ENCODE measurements at regions of chr4 and their contacts with region 1.

Region 1: DNA sequence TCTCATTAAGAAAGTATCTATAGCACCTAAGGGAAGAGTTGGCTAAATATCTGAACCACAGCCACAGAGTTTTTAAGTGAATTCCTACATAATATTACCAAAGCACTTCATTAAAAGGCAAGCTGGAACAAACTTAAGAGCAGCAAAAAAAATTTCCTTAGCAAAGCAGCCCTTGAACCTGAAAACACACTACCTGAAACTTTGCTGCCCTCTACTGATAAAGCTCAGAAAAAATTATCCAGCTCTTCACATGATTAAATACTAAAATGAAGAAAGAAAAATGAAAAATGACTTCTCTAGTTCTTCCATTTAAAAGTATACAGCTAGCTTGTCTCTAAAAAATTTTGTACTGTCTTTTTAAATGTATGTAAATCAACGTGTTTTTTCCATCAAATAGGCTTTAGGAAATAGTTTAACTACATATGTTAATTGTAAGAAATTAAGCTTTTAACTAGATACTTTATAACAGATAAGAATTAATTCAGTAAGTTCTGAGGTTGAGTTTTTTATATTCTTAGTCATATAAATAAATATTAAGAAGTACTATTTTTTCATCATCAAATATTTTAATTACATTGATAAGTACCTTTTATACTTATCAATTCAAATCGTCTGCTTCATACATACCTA is 156.1 kb downstream of the STPG2 start:
- DNase-seq: peak in 1 of 2 experiments; percentile 25
- H3K4me3 ChIP-seq: no peak overlapping the region
- H3K4me3 Mint-ChIP-seq: no peak overlapping the region
- H3K27ac Mint-ChIP-seq: no peak overlapping the region
- H3K4me1 ChIP-seq: no peaks in the 10 kb centered on the region
- H3K4me1 Mint-ChIP-seq: no peaks in the 10 kb centered on the region
- H3K27me3 ChIP-seq: no peaks in the 10 kb centered on the region
- H3K27me3 Mint-ChIP-seq: no peaks in the 10 kb centered on the region
- CTCF ChIP-seq: peak; percentile 35 to 48

Region 2: GRCh38 chr4:96483308-96484030 is 1503.7 kb before region 1 on chr4:
- CTCF ChIA-PET with region 1: no interaction called
- POLR2A ChIA-PET with region 1: no interaction called
- intact Hi-C with region 1: loop called (anchors 10 kb)
- DNase-seq: peak in 1 of 2 experiments; percentile 29
- H3K4me3 ChIP-seq: no peak overlapping the region
- H3K4me3 Mint-ChIP-seq: no peak overlapping the region
- H3K27ac Mint-ChIP-seq: no peak overlapping the region
- H3K4me1 ChIP-seq: no peaks in the 10 kb centered on the region
- H3K4me1 Mint-ChIP-seq: no peaks in the 10 kb centered on the region
- H3K27me3 ChIP-seq: no peaks in the 10 kb centered on the region
- H3K27me3 Mint-ChIP-seq: no peaks in the 10 kb centered on the region
- CTCF ChIP-seq: no peak

Measured in Caco-2 (cell line).